Mammary epithelial cell (primary cell): ENCODE measurements at regions of chr20 and their contacts with region 1.

Region 1: DNA sequence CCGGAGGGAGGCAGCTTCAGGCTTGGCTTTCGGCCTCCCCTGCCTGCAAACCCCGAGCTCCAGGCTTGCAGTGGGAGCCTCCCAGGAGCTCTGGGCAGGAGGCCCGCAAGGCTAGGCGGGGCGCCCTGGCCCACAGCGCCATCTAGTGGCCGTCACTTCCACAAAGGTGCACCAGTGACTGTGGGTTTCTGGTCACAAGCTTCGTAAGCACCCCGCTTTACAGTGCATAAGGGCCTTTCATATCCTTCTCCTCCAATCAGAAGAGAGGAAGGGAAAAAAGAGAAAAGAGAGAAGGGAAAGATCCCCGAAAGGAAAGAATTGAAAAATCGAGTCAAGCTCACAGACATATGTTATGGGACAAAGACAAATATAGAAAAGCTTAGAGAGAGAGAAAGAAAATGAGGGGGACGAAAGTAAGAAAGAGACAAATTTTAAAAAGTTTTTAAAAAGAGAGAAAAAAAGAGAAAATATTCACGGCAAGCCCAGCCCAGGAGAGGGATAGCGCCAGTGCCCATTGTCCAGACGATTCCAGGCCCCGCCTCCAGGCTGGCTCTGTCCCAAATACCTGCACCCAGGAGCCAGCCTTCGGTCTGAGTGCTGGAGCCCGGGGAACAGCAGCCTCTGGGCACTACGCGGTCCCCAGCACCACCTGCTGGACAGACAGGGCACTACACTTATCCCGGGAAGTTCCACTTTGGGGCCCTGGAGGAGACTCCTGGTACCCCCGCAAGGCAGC is 207.1 kb downstream of the PREX1 start:
- DNase-seq: peak; percentile 80
- H3K4me3 ChIP-seq: peak overlapping the region; percentile 31 to 40 (median 32)
- H3K27ac ChIP-seq: peak overlapping the region; percentile 62
- H3K4me1 ChIP-seq: peaks cover 23% of the 10 kb centered on the region
- H3K27me3 ChIP-seq: no peaks in the 10 kb centered on the region
- CTCF ChIP-seq: peak; percentile 90 to 98

Region 2: DNA sequence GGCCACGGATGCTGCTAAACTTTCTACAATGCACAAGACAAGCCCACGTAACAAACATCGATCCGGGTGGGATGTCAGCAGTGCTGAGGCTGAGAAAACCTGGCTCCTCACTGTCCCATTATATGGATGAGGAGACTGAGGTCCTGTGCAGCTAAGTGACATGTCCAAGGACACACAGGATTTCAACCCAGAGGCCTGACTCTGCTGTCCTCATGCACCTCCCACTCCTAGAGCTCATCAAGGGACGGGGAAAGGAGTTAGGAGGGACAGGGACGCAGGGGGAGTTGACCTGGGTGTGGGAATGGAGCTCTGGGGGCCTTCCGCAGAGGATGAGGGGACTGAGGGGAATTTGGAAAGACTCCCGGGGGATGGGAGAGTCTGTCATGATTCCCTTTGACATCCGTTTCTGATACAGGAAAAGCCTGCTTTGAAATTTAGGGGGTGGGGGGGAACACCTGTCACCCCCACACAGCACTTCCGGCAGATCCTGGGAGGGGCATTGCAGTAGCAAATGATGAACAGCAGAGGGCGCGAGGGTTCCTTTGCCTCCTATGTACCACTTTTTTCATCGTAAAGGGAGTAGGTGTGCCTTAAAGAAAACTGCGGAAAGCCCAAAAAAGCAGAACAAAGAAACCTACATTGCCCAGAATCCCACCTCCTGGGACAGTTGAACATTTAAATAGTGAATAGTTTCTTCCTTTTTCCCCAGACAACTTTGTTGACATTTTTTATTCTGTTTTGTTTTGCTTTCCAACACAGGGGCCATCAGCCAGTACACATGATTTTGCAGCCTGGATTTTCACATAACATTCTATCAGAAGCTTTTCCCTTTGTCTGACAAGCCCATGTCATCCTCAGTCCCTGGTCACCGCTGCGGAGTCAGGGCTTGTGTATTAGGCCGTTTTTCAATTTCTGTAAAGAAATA is 1862.7 kb before region 1 on chr20:
- CTCF ChIA-PET with region 1: no interaction called
- dilution Hi-C with region 1: no loop called
- in situ Hi-C with region 1: no loop called
- intact Hi-C with region 1: loop called (anchors 5 kb)
- DNase-seq: peak; percentile 38
- H3K4me3 ChIP-seq: no peak overlapping the region
- H3K27ac ChIP-seq: no peak overlapping the region
- H3K4me1 ChIP-seq: no peaks in the 10 kb centered on the region
- H3K27me3 ChIP-seq: no peaks in the 10 kb centered on the region
- CTCF ChIP-seq: peak; percentile 92 to 97

Region 3: GRCh38 chr20:47677635-47678453 is 942.8 kb before region 1 on chr20:
- CTCF ChIA-PET with region 1: no interaction called
- dilution Hi-C with region 1: loop called (anchors 5 kb)
- in situ Hi-C with region 1: loop called in 1 of 2 experiments (anchors 10 kb)
- intact Hi-C with region 1: loop called (anchors 1 kb)
- DNase-seq: peak; percentile 55
- H3K4me3 ChIP-seq: no peak overlapping the region
- H3K27ac ChIP-seq: no peak overlapping the region
- H3K4me1 ChIP-seq: no peaks in the 10 kb centered on the region
- H3K27me3 ChIP-seq: no peaks in the 10 kb centered on the region
- CTCF ChIP-seq: peak; percentile 68 to 79

Region 4: DNA sequence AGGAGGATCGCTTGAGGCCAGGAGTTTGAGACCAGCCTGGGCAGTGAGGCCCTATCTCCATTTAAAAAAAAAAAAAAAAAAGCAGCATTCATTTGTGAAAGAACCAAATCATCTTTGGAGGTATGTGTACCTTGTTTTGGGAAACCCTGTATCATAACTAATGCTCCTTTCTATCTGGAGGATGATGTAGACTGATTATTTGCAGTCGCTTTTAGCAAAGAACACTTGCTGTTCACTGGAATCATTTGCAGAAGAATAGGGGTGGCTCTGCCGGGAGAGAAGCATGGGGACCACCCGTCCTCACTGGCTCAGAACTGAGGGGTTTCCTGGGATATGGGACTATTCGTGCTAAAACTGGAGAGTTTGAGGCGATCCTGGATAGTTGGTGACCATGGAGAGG is 766.5 kb before region 1 on chr20:
- CTCF ChIA-PET with region 1: no interaction called
- dilution Hi-C with region 1: no loop called
- in situ Hi-C with region 1: no loop called
- intact Hi-C with region 1: loop called (anchors 1 kb)
- DNase-seq: no peak
- H3K4me3 ChIP-seq: no peak overlapping the region
- H3K27ac ChIP-seq: no peak overlapping the region
- H3K4me1 ChIP-seq: no peaks in the 10 kb centered on the region
- H3K27me3 ChIP-seq: no peaks in the 10 kb centered on the region
- CTCF ChIP-seq: no peak

Region 5: GRCh38 chr20:48295445-48295963 is 325.2 kb before region 1 on chr20:
- CTCF ChIA-PET with region 1: interaction called, 15 read pairs
- dilution Hi-C with region 1: no loop called
- in situ Hi-C with region 1: loop called in 1 of 2 experiments (anchors 25 kb)
- intact Hi-C with region 1: loop called (anchors 1 kb)
- DNase-seq: peak; percentile 88
- H3K4me3 ChIP-seq: no peak overlapping the region
- H3K27ac ChIP-seq: no peak overlapping the region
- H3K4me1 ChIP-seq: peaks cover 31% of the 10 kb centered on the region
- H3K27me3 ChIP-seq: no peaks in the 10 kb centered on the region
- CTCF ChIP-seq: peak; percentile 64 to 66

Region 6: DNA sequence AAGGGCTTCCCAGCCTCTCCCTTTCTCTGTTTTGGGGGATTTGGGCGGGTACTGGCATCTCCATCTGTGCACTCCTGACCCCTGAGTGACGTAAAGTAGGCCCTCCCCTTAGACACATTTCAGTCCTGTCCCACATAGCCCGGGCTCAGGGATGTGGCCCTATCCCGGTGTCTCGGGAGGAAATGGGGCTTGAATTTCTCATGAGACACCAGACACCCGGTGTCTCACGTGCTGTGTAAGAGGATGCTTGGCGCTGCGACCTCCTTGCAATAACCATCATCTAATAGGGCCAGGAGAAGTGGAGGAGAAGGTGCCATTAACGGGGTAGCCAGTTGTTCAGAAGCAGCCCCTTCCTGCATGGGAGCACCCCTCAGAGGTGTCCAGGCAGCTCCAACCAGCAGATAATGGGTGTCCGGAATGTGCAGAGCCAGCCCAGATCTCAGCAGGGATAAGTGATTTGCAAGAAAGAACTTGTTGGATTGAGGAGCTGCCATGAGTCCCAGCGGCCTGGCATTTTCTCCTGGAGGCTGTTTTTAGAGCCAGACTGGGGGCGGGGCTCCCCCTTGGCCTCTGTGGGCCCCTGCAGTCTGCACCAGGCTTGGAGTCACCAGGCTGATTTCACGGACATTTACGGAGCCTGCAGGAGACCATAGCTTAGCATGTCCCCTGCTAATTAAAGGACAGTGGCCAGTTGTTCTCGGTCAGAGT is 164.9 kb before region 1 on chr20:
- CTCF ChIA-PET with region 1: interaction called, 6 read pairs
- dilution Hi-C with region 1: no loop called
- in situ Hi-C with region 1: no loop called
- intact Hi-C with region 1: loop called (anchors 2 kb)
- DNase-seq: peak; percentile 31
- H3K4me3 ChIP-seq: no peak overlapping the region
- H3K27ac ChIP-seq: no peak overlapping the region
- H3K4me1 ChIP-seq: no peaks in the 10 kb centered on the region
- H3K27me3 ChIP-seq: no peaks in the 10 kb centered on the region
- CTCF ChIP-seq: no peak